ENCODE measurements at regions of chr10 and their contacts with region 1.

Region 1: DNA sequence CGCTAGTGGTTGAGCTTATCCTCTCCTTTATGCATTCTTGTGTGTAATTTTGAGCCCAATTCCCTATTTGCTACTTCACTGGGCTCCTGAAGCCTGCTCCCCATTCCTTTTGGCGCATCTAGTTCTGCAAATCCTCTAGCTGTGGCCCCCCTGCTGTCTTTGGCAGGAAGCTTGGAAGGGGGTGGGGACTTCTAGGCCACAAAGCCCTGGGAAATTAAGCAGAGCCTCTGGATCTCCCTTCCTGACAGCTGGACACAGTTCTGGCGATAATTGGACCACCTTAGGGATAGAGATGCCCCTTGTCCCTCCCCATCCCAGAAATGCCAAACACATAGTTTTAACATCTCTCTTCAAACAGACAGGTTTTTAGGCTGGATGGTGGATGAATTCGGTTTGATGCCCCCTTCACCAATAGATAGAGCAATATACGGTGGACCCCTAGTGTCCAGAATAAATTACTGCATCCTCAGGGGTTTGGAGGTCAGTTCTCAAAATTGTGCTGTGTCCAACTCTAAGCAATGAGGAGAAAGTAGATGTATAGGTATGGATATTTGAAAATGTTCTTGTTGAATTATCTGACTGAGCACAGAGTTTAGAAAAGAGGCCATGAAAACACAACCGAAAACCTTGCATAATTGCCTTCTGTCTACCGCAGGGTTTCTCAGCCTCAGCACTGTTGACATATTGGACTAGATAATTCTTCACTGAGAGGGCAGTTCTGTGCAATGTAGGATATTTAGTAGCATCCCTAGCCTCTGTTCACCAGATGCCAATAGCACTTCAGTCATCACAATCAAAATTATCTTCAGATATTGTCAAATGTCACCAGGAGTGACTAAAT is 75.5 kb downstream of the PAPSS2 start:
- DNase-seq: no peak
- ATAC-seq: peak; percentile 84
- H3K4me3 ChIP-seq: no peak overlapping the region
- H3K27ac ChIP-seq: peak overlapping the region; percentile 48
- H3K4me1 ChIP-seq: peaks cover 21% of the 10 kb centered on the region
- H3K27me3 ChIP-seq: no peaks in the 10 kb centered on the region
- CTCF ChIP-seq: peak; percentile 77

Region 2: DNA sequence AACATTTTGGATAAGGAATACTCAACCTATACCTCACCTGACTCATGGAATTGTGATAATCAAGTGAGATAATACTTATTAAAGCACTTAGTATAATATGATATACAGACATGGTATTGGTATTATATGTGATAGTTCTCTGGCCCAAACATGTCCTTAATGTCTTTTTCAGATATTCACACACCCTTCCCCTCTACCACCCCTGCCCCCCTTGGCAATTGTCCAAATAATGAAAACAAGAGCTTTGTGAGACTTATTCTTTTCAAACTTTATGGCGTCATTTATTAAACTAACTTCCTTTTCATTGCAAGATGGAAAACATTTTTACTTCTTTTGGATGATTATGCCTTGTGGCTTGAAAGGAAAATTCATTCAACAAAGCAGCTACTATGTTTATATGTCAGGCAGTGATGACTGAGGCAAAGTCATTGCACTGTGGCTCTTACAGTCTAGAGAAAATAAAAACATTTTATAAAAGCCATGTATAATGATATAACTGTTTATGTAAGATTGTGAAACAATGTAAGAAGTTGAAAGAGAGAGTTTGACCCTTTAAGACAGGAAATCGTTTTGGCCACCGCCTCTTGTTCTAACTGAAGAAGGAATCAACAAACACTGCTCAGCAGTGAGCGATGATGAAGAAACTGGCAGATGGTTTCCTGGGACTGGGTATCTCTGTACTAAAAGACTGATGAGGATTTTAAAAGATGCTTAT is 203.1 kb before region 1 on chr10:
- intact Hi-C with region 1: loop called (anchors 10 kb)
- DNase-seq: no peak
- ATAC-seq: peak; percentile 72
- H3K4me3 ChIP-seq: no peak overlapping the region
- H3K27ac ChIP-seq: peak overlapping the region; percentile 62
- H3K4me1 ChIP-seq: peaks cover 22% of the 10 kb centered on the region
- H3K27me3 ChIP-seq: no peaks in the 10 kb centered on the region
- CTCF ChIP-seq: no peak

Region 3: DNA sequence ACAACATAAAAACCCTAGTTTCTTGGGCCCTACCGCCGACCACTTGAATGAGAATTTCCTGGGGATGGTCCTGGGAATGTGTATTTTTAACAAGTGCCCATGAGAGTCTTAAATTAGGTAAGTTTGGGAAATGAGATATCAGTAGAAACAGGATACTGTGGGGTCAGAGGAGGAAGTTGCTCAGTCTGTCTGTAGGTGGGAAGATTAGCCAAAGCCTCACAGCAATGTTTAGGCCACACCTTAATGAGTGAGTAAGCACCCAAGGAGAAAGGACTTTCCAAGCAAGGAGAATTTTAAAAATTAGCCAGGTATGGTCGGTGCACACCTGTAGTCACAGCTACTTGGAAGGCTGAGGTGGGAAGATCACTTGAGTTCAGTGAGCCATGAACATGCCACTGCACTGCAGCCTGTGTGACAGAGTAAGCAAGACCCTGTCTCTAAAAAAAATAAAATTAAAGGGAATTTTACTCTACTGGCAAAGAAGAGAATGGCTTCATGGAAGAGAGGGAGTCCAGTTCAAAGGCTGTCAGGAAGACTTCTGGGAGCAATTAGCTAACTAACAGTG is 43.6 kb before region 1 on chr10:
- intact Hi-C with region 1: no loop called
- DNase-seq: no peak
- ATAC-seq: peak; percentile 58
- H3K4me3 ChIP-seq: no peak overlapping the region
- H3K27ac ChIP-seq: no peak overlapping the region
- H3K4me1 ChIP-seq: peaks cover 18% of the 10 kb centered on the region
- H3K27me3 ChIP-seq: no peaks in the 10 kb centered on the region
- CTCF ChIP-seq: no peak

Region 4: DNA sequence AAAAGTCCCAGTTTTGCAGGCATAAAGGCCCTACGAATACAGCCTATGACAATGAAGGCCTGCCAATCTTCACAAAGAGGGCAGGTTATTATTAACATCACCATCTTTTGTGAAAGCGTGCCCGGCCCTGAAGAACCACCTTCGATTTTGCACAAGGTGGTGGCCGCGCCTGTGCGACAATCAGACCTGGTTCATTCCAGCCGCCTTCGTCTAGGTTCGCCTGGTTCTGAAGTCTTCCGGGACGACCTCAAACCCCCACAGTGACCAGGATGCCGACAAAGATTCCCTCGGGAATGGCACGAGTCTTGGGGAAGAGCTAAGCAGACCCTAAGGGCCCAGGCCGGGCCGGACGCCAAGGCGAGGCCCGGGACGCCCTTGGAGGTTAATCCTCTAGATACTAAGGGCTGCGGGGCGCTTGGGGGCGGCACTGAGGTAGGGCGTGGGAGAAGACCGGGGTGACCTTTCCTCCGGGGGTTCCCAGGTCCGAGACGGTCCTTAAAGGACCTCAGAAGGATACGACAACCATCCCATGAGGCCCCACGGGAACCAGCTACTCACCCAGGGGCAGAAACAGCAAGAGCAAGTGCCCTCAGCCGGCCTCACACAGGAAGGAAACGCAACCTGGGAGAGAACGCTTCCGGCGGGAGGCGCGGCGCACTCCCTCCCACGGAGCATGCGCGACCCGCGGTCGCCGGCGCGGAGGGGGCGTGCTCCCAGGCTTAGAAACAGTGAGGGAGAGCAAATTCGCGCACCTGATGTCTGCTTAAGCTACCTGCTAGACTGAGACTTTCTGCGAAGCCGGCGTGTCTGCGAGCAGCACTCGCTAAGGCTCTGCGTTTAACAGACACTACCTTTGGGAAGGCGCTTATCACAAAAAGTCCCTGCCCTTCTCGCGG is 82.7 kb after region 1 on chr10 and contains the start of gene ATAD1:
- intact Hi-C with region 1: no loop called
- DNase-seq: peak; percentile 93
- ATAC-seq: peak; percentile 99
- H3K4me3 ChIP-seq: peak within 1 kb of the TSS; percentile 72
- H3K27ac ChIP-seq: peak within 1 kb of the TSS; percentile 86
- H3K4me1 ChIP-seq: peaks cover 23% of the 10 kb centered on the region
- H3K27me3 ChIP-seq: no peaks in the 10 kb centered on the region
- CTCF ChIP-seq: peak; percentile 29
- total RNA-seq, gene ATAD1: 45.9 TPM

Measured in upper lobe of right lung (tissue), 1 donor.